CD4-positive, alpha-beta memory T cell (primary cell): ENCODE measurements at regions of chr19 and their contacts with region 1.

Region 1: GRCh38 chr19:23395041-23395721 is at the start of gene ZNF91:
- DNase-seq: peak; percentile 88 to 97 (median 93)
- H3K4me3 ChIP-seq: peak within 1 kb of the TSS; percentile 91 to 92
- H3K4me3 Mint-ChIP-seq: peak within 1 kb of the TSS; percentile 98 to 99 (median 98)
- H3K27ac ChIP-seq: peak within 1 kb of the TSS; percentile 99
- H3K27ac Mint-ChIP-seq: peak within 1 kb of the TSS; percentile 98 to 99 (median 98)
- H3K4me1 ChIP-seq: peaks cover 36% of the 10 kb centered on the region
- H3K4me1 Mint-ChIP-seq: peaks cover 24 to 47% (median 33%) of the 10 kb centered on the region in 4 donors
- H3K27me3 ChIP-seq: no peaks in the 10 kb centered on the region
- H3K27me3 Mint-ChIP-seq: no peaks in the 10 kb centered on the region
- total RNA-seq, gene ZNF91: 111 to 113 TPM

Region 2: GRCh38 chr19:23273590-23274413 is 121.4 kb before region 1 on chr19:
- CTCF ChIA-PET with region 1: interaction called, 3 read pairs
- POLR2A ChIA-PET with region 1: interaction called, 44 read pairs
- intact Hi-C with region 1: loop called (anchors 1 kb)
- DNase-seq: peak; percentile 89 to 94 (median 90)
- H3K4me3 ChIP-seq: peak overlapping the region; percentile 94 to 99
- H3K4me3 Mint-ChIP-seq: peak overlapping the region; percentile 96 to 99 (median 98)
- H3K27ac ChIP-seq: peak overlapping the region; percentile 92
- H3K27ac Mint-ChIP-seq: peak overlapping the region; percentile 93 to 97 (median 97)
- H3K4me1 ChIP-seq: peaks cover 21% of the 10 kb centered on the region
- H3K4me1 Mint-ChIP-seq: peaks cover 21 to 55% (median 30%) of the 10 kb centered on the region in 4 donors
- H3K27me3 ChIP-seq: no peaks in the 10 kb centered on the region
- H3K27me3 Mint-ChIP-seq: no peaks in the 10 kb centered on the region

Region 3: GRCh38 chr19:23686621-23687423 is 291.6 kb after region 1 on chr19 and contains the start of gene ZNF675:
- CTCF ChIA-PET with region 1: interaction called, 4 read pairs
- POLR2A ChIA-PET with region 1: interaction called, 26 read pairs
- intact Hi-C with region 1: loop called (anchors 1 kb)
- DNase-seq: peak; percentile 87 to 93 (median 88)
- H3K4me3 ChIP-seq: peak within 1 kb of the TSS; percentile 64 to 100
- H3K4me3 Mint-ChIP-seq: peak within 1 kb of the TSS; percentile 99 to 100 (median 99)
- H3K27ac ChIP-seq: peak within 1 kb of the TSS; percentile 83
- H3K27ac Mint-ChIP-seq: peak within 1 kb of the TSS; percentile 96 to 99 (median 98)
- H3K4me1 ChIP-seq: peaks cover 32% of the 10 kb centered on the region
- H3K4me1 Mint-ChIP-seq: peaks cover 35 to 60% (median 48%) of the 10 kb centered on the region in 4 donors
- H3K27me3 ChIP-seq: no peaks in the 10 kb centered on the region
- H3K27me3 Mint-ChIP-seq: no peaks in the 10 kb centered on the region
- total RNA-seq, gene ZNF675: 34.3 to 36.9 TPM

Region 4: GRCh38 chr19:23914402-23915301 is 519.5 kb after region 1 on chr19 and contains the start of gene ZNF726:
- CTCF ChIA-PET with region 1: no interaction called
- POLR2A ChIA-PET with region 1: interaction called, 9 read pairs
- intact Hi-C with region 1: loop called (anchors 10 kb)
- DNase-seq: peak; percentile 88 to 92 (median 89)
- H3K4me3 ChIP-seq: peak within 1 kb of the TSS; percentile 53 to 59
- H3K4me3 Mint-ChIP-seq: peak within 1 kb of the TSS; percentile 93 to 97 (median 95)
- H3K27ac ChIP-seq: peak within 1 kb of the TSS; percentile 53
- H3K27ac Mint-ChIP-seq: peak within 1 kb of the TSS; percentile 90 to 96 (median 91)
- H3K4me1 ChIP-seq: no peaks in the 10 kb centered on the region
- H3K4me1 Mint-ChIP-seq: peaks cover 6 to 24% (median 15%) of the 10 kb centered on the region in 4 donors
- H3K27me3 ChIP-seq: no peaks in the 10 kb centered on the region
- H3K27me3 Mint-ChIP-seq: no peaks in the 10 kb centered on the region
- total RNA-seq, gene ZNF726: 3.0 to 3.3 TPM